K562 (cell line): ENCODE measurements at regions of chr3 and their contacts with region 1.

Region 1: GRCh38 chr3:72270072-72270681 is 485.2 kb upstream of the PROK2 start:
- DNase-seq: peak; percentile 68 to 88 (median 74)
- ATAC-seq: peak; percentile 82
- H3K4me3 ChIP-seq: no peak overlapping the region
- H3K27ac ChIP-seq: peak overlapping the region; percentile 78
- H3K4me1 ChIP-seq: peaks cover 13 to 56% of the 10 kb centered on the region in 2 experiments; a peak in 4 of 5 replicates
- H3K27me3 ChIP-seq: no peaks in the 10 kb centered on the region
- CTCF ChIP-seq: no peak
- EP300 ChIP-seq: peak; percentile 81
- POLR2A ChIP-seq: no peak
- RAD21 ChIP-seq: peak; percentile 24 to 34; a peak in 3 of 4 replicates

Region 2: DNA sequence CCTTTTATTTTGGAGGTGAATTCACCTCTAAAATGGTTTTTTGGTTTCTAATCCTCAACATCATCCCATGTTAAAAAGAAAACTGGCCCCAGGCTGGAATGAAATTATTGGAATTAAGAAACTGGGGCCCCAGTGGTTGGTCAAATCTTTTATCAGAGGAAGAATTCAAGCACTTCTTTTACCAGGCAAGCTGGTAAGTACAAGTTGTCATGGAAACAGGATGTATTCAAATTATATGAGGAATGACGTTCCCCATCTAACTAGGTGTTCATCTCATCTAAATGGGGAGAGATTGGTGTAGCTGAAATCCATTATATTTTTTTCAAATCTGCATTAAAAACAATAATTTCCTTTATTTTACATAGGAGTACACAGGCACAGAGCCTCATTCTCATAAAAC is 535.3 kb before region 1 on chr3:
- CTCF ChIA-PET with region 1: no interaction called
- POLR2A ChIA-PET with region 1: no interaction called
- in situ Hi-C with region 1: loop called (anchors 10 kb)
- intact Hi-C with region 1: no loop called
- DNase-seq: no peak
- ATAC-seq: no peak
- H3K4me3 ChIP-seq: no peak overlapping the region
- H3K27ac ChIP-seq: no peak overlapping the region
- H3K4me1 ChIP-seq: no peaks in the 10 kb centered on the region
- H3K27me3 ChIP-seq: no peaks in the 10 kb centered on the region
- CTCF ChIP-seq: no peak
- EP300 ChIP-seq: no peak
- POLR2A ChIP-seq: no peak
- RAD21 ChIP-seq: no peak

Region 3: GRCh38 chr3:71955240-71956068 is 314.7 kb before region 1 on chr3:
- CTCF ChIA-PET with region 1: no interaction called
- POLR2A ChIA-PET with region 1: no interaction called
- in situ Hi-C with region 1: loop called (anchors 10 kb)
- intact Hi-C with region 1: loop called (anchors 1 kb)
- DNase-seq: peak; percentile 21 to 66 (median 35)
- ATAC-seq: peak; percentile 64
- H3K4me3 ChIP-seq: no peak overlapping the region
- H3K27ac ChIP-seq: no peak overlapping the region
- H3K4me1 ChIP-seq: peaks cover 0 to 5% of the 10 kb centered on the region in 2 experiments; a peak in 2 of 5 replicates
- H3K27me3 ChIP-seq: peaks cover 0 to 6% of the 10 kb centered on the region in 2 experiments; a peak in 2 of 5 replicates
- CTCF ChIP-seq: peak; percentile 60 to 71 (median 63)
- EP300 ChIP-seq: peak; percentile 46
- POLR2A ChIP-seq: no peak
- RAD21 ChIP-seq: peak; percentile 68 to 80

Region 4: GRCh38 chr3:72163809-72164634 is 106.2 kb before region 1 on chr3:
- CTCF ChIA-PET with region 1: no interaction called
- POLR2A ChIA-PET with region 1: interaction called, 4 read pairs
- in situ Hi-C with region 1: no loop called
- intact Hi-C with region 1: loop called (anchors 5 kb)
- DNase-seq: peak; percentile 69 to 89 (median 76)
- ATAC-seq: peak; percentile 92
- H3K4me3 ChIP-seq: no peak overlapping the region
- H3K27ac ChIP-seq: peak overlapping the region; percentile 77; the same call in 1 of the 3 replicates
- H3K4me1 ChIP-seq: peaks cover 18 to 42% of the 10 kb centered on the region in 2 experiments; a peak in 4 of 5 replicates
- H3K27me3 ChIP-seq: no peaks in the 10 kb centered on the region
- CTCF ChIP-seq: no peak
- EP300 ChIP-seq: peak; percentile 96
- POLR2A ChIP-seq: no peak
- RAD21 ChIP-seq: peak; percentile 7 to 44; a peak in 3 of 4 replicates

Region 5: GRCh38 chr3:72319194-72320094 is 49.3 kb after region 1 on chr3:
- CTCF ChIA-PET with region 1: no interaction called
- POLR2A ChIA-PET with region 1: no interaction called
- in situ Hi-C with region 1: no loop called
- intact Hi-C with region 1: loop called (anchors 5 kb)
- DNase-seq: peak; percentile 40 to 86 (median 66)
- ATAC-seq: peak; percentile 74
- H3K4me3 ChIP-seq: no peak overlapping the region
- H3K27ac ChIP-seq: peak overlapping the region; percentile 75
- H3K4me1 ChIP-seq: peaks cover 36 to 51% of the 10 kb centered on the region in 2 experiments
- H3K27me3 ChIP-seq: no peaks in the 10 kb centered on the region
- CTCF ChIP-seq: no peak
- EP300 ChIP-seq: peak; percentile 78
- POLR2A ChIP-seq: no peak; the same call in 1 of the 2 replicates
- RAD21 ChIP-seq: no peak; a peak in 1 of 4 replicates

Region 6: DNA sequence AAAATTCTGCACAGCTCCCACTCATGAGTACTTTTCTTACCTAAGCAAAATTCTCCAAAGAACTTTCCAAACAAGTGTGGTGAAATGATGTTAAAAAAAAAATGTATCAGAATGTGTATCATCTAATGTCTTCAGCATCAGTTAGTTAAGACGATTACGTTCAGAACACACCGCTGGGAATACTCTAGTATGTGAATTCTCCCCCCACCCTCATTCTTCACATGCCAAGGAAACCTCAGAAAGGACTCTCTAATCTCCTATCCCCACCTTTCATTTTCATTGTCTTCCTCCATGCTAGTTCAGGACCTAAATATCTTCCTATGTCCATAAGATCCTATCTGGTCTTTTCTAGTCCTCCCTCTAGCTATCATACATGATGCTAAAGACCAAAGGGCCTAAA is 120.7 kb after region 1 on chr3:
- CTCF ChIA-PET with region 1: no interaction called
- POLR2A ChIA-PET with region 1: no interaction called
- in situ Hi-C with region 1: no loop called
- intact Hi-C with region 1: no loop called
- DNase-seq: no peak
- ATAC-seq: no peak; the same call in 2 of the 3 replicates
- H3K4me3 ChIP-seq: no peak overlapping the region
- H3K27ac ChIP-seq: no peak overlapping the region
- H3K4me1 ChIP-seq: peaks cover 9 to 23% of the 10 kb centered on the region in 2 experiments; a peak in 3 of 5 replicates
- H3K27me3 ChIP-seq: no peaks in the 10 kb centered on the region
- CTCF ChIP-seq: no peak
- EP300 ChIP-seq: no peak
- POLR2A ChIP-seq: no peak
- RAD21 ChIP-seq: no peak

Region 7: GRCh38 chr3:72447059-72447946 is 177.1 kb after region 1 on chr3:
- CTCF ChIA-PET with region 1: no interaction called
- POLR2A ChIA-PET with region 1: no interaction called
- in situ Hi-C with region 1: no loop called
- intact Hi-C with region 1: loop called (anchors 5 kb)
- DNase-seq: peak; percentile 82 to 89 (median 85)
- ATAC-seq: peak; percentile 58
- H3K4me3 ChIP-seq: peak overlapping the region; percentile 69
- H3K27ac ChIP-seq: peak overlapping the region; percentile 93
- H3K4me1 ChIP-seq: peaks cover 27 to 42% of the 10 kb centered on the region in 2 experiments
- H3K27me3 ChIP-seq: no peaks in the 10 kb centered on the region
- CTCF ChIP-seq: no peak
- EP300 ChIP-seq: no peak
- POLR2A ChIP-seq: 0 out of 2 replicates have a peak, but pooled peaks have one; percentile 36
- RAD21 ChIP-seq: no peak; a peak in 1 of 4 replicates